HepG2 (cell line): ENCODE measurements at regions of chr10 and their contacts with region 1.

Region 1: GRCh38 chr10:88880282-88881076 is 434 bp downstream of the STAMBPL1 start:
- DNase-seq: peak; percentile 36
- ATAC-seq: peak; percentile 94
- H3K4me3 ChIP-seq: peak overlapping the region; percentile 65 to 85 (median 67)
- H3K27ac ChIP-seq: peak overlapping the region; percentile 14
- H3K4me1 ChIP-seq: peaks cover 20% of the 10 kb centered on the region
- H3K27me3 ChIP-seq: peaks cover 0 to 15% of the 10 kb centered on the region in 2 experiments; a peak in 1 of 5 replicates
- CTCF ChIP-seq: peak; percentile 57
- EP300 ChIP-seq: no peak
- POLR2A ChIP-seq: 0 out of 4 replicates have a peak, but pooled peaks have one; percentile 7 to 19
- RAD21 ChIP-seq: no peak

Region 2: DNA sequence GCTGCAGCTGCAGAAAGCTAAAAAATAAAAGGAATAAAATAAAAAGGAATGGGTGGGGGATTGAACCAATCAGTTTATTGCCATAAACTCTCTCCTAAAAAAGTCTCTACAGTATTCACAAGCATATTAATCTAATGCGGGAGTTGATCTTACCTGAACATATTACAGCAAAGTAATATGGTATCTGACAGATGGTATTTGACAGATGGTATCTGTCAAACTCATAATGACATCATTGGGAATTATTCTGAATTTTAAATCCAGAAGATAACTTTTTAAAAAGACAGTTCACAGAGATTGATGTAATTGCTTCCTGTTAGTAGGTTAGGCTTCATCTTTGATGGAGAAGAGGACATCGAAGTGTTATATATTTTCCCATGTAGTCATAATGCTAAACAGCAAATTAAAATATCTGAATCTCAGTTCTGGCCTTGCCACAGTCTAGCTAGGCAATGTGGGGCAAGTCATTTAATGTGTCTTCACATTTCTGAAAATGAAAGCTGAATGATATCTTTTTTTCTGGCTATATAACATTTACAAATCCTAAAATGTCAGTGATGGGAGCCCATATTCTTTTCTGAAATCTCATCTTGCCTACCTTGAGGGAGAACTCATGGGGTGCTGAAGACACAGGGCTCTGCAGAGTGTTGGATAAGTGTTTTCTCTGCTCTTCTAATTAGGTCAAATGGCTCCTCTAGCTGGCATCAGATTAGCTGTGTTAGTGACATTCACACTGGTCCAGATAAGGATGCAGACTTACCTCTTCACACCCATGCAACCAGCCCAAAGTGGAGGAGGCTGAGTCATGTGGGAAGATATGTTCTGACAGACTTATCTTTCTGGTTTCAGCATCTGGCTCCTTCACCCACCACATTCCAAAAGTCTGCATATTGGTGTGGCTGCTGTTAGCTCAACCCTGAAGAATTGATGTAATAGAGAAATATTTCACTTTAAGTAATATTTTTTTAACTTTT is 80.0 kb before region 1 on chr10:
- CTCF ChIA-PET with region 1: no interaction called
- POLR2A ChIA-PET with region 1: no interaction called
- in situ Hi-C with region 1: no loop called
- intact Hi-C with region 1: no loop called
- DNase-seq: no peak
- ATAC-seq: no peak
- H3K4me3 ChIP-seq: no peak overlapping the region
- H3K27ac ChIP-seq: no peak overlapping the region
- H3K4me1 ChIP-seq: no peaks in the 10 kb centered on the region
- H3K27me3 ChIP-seq: no peaks in the 10 kb centered on the region
- CTCF ChIP-seq: no peak
- EP300 ChIP-seq: no peak
- POLR2A ChIP-seq: no peak
- RAD21 ChIP-seq: no peak

Region 3: DNA sequence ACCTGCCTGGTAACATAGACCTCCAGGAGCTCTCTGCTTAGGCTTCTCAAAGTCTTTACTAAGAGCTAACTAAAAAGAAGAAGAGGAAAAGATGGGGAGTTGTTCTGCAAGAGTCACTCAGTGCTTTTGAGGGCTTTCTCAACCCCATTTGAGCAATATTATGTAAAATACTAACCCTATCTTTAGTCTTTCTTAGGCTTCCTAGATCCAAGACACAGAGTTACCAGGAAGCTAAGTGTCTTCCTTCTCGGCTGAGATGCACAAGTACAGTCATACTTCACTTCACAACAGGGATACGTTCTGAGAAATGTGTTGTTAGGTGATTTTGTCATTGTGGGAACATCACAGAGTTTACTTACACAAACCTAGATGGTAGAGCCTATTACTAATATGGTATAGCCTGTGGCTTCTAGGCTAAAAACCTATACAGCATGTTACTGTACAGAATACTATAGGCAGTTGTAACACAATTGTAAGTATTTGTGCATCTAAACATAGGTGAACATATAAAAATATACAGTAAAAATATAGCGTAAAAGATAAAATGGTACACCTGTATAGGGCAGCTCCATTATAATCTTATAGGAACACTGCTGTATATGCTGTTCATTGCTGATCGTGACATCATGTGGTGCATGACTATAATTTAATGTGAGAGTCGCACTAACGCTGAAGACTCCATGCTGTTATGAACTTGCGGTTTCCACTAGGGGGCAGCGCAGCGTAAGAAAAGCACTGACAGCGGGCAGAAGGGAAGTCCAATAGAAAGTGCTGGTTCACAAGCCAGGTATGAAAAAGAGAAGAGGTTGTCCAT is 45.2 kb before region 1 on chr10:
- CTCF ChIA-PET with region 1: no interaction called
- POLR2A ChIA-PET with region 1: no interaction called
- in situ Hi-C with region 1: no loop called
- intact Hi-C with region 1: loop called (anchors 2 kb)
- DNase-seq: peak; percentile 68
- ATAC-seq: peak; percentile 99
- H3K4me3 ChIP-seq: no peak overlapping the region
- H3K27ac ChIP-seq: no peak overlapping the region
- H3K4me1 ChIP-seq: no peaks in the 10 kb centered on the region
- H3K27me3 ChIP-seq: no peaks in the 10 kb centered on the region
- CTCF ChIP-seq: peak; percentile 90
- EP300 ChIP-seq: no peak
- POLR2A ChIP-seq: no peak
- RAD21 ChIP-seq: no peak; the same call in 1 of the 2 replicates

Region 4: DNA sequence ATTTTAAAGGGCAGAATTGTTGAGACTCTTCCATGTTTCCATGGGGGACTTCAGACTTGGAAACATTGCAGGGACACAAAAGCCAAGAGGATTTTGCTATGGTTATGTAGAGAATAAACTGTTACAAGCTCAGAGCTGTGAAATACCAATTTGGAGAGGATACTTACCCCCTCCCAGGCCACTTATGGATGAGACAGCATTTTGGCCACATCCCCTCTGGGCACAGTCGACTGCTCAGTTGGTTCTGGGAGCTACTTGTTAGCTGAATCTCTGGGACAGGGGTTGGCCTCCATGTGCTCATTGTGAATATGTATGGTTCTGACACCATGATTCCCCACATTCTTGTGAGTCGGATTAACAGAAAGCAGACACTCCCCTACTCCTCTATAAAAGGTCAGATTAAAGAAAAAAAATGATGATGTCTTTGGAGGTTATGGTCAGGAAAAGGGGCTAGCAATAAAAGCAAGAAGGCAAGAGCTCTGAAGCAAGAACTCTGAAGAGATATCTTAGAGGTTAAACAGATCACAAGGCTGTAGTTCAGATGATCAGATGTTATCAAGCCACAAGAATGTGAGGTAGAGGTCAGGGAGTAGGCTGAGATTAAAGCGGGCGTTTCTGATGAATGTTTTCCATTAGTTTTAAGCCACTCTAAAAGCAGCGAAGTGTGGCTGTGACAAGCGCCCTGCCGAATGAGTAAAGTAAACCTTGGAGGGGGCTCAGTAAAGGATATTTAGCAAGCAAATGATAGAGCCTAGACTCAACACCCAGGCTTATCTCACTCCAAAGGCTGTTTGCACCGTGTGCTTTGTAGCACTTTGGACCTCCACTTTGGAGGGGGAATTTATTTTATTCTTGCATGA is 16.7 kb after region 1 on chr10:
- CTCF ChIA-PET with region 1: no interaction called
- POLR2A ChIA-PET with region 1: no interaction called
- in situ Hi-C with region 1: no loop called
- intact Hi-C with region 1: loop called (anchors 1 kb)
- DNase-seq: peak; percentile 44
- ATAC-seq: peak; percentile 68
- H3K4me3 ChIP-seq: peak overlapping the region in 1 of 3 experiments; percentile 17; a peak in 1 of 6 replicates
- H3K27ac ChIP-seq: peak overlapping the region; percentile 24
- H3K4me1 ChIP-seq: peaks cover 34% of the 10 kb centered on the region
- H3K27me3 ChIP-seq: no peaks in the 10 kb centered on the region
- CTCF ChIP-seq: no peak
- EP300 ChIP-seq: no peak
- POLR2A ChIP-seq: no peak
- RAD21 ChIP-seq: no peak

Region 5: DNA sequence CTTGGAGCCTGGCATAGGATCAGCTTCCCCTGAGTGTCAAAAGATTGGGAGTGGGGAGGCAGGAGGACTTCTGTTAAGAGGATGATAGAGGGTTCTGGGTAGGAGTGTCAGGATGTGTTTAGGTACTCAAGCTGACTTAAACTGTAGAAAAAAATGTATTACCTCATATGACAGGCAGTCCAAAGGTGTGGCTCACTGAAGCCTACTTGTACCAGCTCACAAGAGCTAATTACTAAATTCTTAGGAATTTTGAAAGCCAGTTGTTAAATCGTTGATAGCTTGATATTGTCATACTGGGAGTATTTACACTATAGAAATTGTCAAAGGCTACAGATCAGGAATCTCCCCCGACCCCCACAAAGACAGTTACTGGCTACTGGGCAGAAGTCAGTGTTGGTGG is 142.3 kb after region 1 on chr10:
- CTCF ChIA-PET with region 1: no interaction called
- POLR2A ChIA-PET with region 1: no interaction called
- in situ Hi-C with region 1: no loop called
- intact Hi-C with region 1: loop called (anchors 5 kb)
- DNase-seq: no peak
- ATAC-seq: no peak
- H3K4me3 ChIP-seq: no peak overlapping the region
- H3K27ac ChIP-seq: no peak overlapping the region
- H3K4me1 ChIP-seq: peaks cover 11% of the 10 kb centered on the region
- H3K27me3 ChIP-seq: no peaks in the 10 kb centered on the region
- CTCF ChIP-seq: no peak
- EP300 ChIP-seq: no peak
- POLR2A ChIP-seq: no peak
- RAD21 ChIP-seq: no peak

Region 6: GRCh38 chr10:89217057-89217990 is 336.8 kb after region 1 on chr10:
- CTCF ChIA-PET with region 1: no interaction called
- POLR2A ChIA-PET with region 1: no interaction called
- in situ Hi-C with region 1: no loop called
- intact Hi-C with region 1: no loop called
- DNase-seq: peak; percentile 43
- ATAC-seq: no peak
- H3K4me3 ChIP-seq: no peak overlapping the region
- H3K27ac ChIP-seq: no peak overlapping the region
- H3K4me1 ChIP-seq: no peaks in the 10 kb centered on the region
- H3K27me3 ChIP-seq: no peaks in the 10 kb centered on the region
- CTCF ChIP-seq: peak; percentile 59
- EP300 ChIP-seq: no peak
- POLR2A ChIP-seq: no peak
- RAD21 ChIP-seq: no peak